ENCODE measurements at regions of chr2 and their contacts with region 1.

Region 1: DNA sequence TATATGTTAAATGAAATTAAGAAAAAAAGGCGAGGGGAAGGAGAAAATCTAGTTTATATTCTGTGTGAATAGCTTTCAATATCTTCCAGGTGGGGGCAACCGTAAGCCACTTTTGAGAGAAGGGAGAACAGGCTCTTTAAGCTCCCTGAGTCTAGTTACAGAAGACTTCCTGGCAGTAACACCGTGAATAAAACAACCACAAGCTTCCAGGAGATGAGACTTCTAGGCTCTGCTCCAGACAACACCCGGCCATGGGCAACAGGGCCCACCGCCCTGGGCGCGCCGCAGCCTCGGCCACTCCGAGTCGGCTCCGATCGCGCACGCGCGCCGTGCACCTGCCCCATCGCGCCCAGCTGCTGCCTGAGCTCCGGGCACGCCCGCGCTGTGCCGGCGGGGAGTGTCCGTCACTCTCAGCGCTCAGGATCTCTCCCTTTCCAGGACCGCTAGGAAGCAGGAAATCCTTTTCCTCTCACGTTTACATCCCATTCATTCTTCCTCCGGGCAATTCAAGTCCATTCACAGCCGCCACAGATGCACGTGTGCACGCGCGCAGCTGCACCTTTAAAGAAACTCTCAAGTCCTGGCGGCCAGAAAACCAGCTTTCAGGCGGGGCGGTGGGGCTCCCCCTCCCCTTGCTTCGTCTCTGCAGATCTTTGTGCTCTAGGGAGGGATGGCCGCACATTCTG is 19.4 kb upstream of the PAX3 start:
- DNase-seq: peak in 1 of 2 donors; percentile 52
- H3K4me3 ChIP-seq: peak overlapping the region; percentile 12 to 35
- H3K27ac ChIP-seq: no peak overlapping the region
- H3K4me1 ChIP-seq: no peaks in the 10 kb centered on the region
- H3K27me3 ChIP-seq: peaks cover 0 to 4% of the 10 kb centered on the region in 2 donors
- CTCF ChIP-seq: peak; percentile 34 to 54 (median 50)
- POLR2A ChIP-seq: no peak

Region 2: GRCh38 chr2:222561817-222562645 is 243.9 kb after region 1 on chr2:
- intact Hi-C with region 1: loop called (anchors 5 kb)
- DNase-seq: peak; percentile 40 to 61
- H3K4me3 ChIP-seq: no peak overlapping the region
- H3K27ac ChIP-seq: no peak overlapping the region
- H3K4me1 ChIP-seq: no peaks in the 10 kb centered on the region
- H3K27me3 ChIP-seq: no peaks in the 10 kb centered on the region
- CTCF ChIP-seq: peak; percentile 56 to 67 (median 61)
- POLR2A ChIP-seq: no peak

Measured in uterus (tissue), 4 donors.